HepG2 (cell line): ENCODE measurements at regions of chr2 and their contacts with region 1.

Region 1: GRCh38 chr2:197804049-197804757 is at the start of gene PLCL1:
- DNase-seq: peak; percentile 89
- ATAC-seq: peak; percentile 100
- H3K4me3 ChIP-seq: peak within 1 kb of the TSS; percentile 61 to 70 (median 65)
- H3K27ac ChIP-seq: no peak within 1 kb of the TSS
- H3K4me1 ChIP-seq: peaks cover 10% of the 10 kb centered on the region
- H3K27me3 ChIP-seq: peaks cover 6 to 44% of the 10 kb centered on the region in 2 experiments
- CTCF ChIP-seq: no peak
- EP300 ChIP-seq: no peak
- POLR2A ChIP-seq: no peak
- RAD21 ChIP-seq: peak; percentile 41; the same call in 1 of the 2 replicates
- total RNA-seq, gene PLCL1: not detected in 2 replicates

Region 2: GRCh38 chr2:198053776-198054698 is 249.8 kb after region 1 on chr2:
- CTCF ChIA-PET with region 1: interaction called, 18 read pairs
- POLR2A ChIA-PET with region 1: no interaction called
- in situ Hi-C with region 1: loop called (anchors 5 kb)
- intact Hi-C with region 1: loop called (anchors 1 kb)
- DNase-seq: peak; percentile 10
- ATAC-seq: peak; percentile 96
- H3K4me3 ChIP-seq: no peak overlapping the region
- H3K27ac ChIP-seq: no peak overlapping the region
- H3K4me1 ChIP-seq: no peaks in the 10 kb centered on the region
- H3K27me3 ChIP-seq: no peaks in the 10 kb centered on the region
- CTCF ChIP-seq: peak; percentile 47
- EP300 ChIP-seq: no peak
- POLR2A ChIP-seq: no peak
- RAD21 ChIP-seq: no peak

Region 3: DNA sequence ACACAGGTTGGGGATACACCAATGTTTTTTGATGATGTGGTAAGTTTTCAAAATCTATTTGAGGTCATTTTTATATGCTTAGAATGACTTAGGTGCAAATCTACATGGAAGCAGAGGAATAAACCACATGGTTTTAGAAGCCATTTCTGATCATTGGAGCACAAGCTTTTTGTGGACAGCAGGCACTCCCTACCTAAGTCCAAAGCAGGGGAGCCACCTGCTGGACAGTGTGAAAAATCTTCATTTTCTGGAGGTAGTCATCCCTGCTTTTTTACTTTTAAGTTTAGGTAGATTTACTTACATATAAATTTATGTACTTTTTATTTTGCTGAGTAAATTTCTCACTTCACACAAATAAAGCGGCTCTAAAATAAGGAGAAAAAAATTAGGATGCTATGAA is 323.4 kb after region 1 on chr2:
- CTCF ChIA-PET with region 1: interaction called, 36 read pairs
- POLR2A ChIA-PET with region 1: no interaction called
- in situ Hi-C with region 1: loop called (anchors 5 kb)
- intact Hi-C with region 1: loop called (anchors 1 kb)
- DNase-seq: peak; percentile 56
- ATAC-seq: peak; percentile 93
- H3K4me3 ChIP-seq: no peak overlapping the region
- H3K27ac ChIP-seq: no peak overlapping the region
- H3K4me1 ChIP-seq: peaks cover 5% of the 10 kb centered on the region; the same call in 1 of the 2 replicates
- H3K27me3 ChIP-seq: no peaks in the 10 kb centered on the region
- CTCF ChIP-seq: peak; percentile 76
- EP300 ChIP-seq: no peak
- POLR2A ChIP-seq: no peak
- RAD21 ChIP-seq: no peak